CD4-positive, alpha-beta memory T cell (primary cell): ENCODE measurements at regions of chr1 and their contacts with region 1.

Region 1: DNA sequence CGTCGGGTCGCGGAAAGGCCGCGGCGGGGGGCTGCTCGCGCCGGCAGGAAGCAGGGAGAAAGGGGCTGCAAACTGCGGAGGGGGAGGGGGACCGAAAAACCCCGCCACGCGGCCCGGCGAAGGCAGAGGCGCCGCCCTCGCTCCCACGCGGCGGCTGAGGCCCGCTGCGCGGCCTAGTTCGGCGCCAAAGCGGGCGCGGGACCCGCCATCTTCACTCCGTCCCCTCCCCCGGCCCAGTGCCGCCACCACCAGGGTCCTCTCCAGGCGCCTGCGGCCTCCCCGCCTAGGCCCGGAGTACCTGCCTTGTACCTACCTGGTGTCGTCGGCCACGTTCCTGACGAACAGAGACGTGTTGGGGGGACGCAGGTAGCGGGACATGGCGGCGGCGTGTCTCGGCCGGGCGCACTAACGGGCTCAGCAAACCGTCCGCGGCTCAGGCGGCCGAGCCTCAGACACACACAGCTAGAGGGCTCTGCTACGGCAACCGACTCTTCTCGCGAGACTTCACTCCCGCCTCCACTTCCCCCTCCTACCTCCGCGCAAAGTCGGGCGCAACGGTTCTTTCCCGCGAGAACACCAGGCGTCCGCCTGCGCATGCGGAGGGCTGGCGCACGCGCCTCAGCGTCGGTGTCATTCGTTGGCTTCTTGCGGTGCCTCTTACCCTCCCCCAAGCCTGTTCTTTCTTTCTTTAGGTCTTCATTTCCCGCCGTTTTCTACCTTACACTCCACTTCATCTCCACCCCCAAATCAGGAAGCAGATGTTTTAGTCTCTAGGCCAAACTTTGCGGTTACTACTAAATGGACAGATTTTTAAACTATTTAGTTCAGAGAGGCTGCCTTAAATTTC is at the start of gene SRSF10:
- DNase-seq: peak; percentile 97 to 99 (median 98)
- H3K4me3 ChIP-seq: peak within 1 kb of the TSS; percentile 80 to 85
- H3K4me3 Mint-ChIP-seq: peak within 1 kb of the TSS; percentile 88 to 98 (median 94)
- H3K27ac ChIP-seq: peak within 1 kb of the TSS; percentile 93
- H3K27ac Mint-ChIP-seq: peak within 1 kb of the TSS; percentile 92 to 99 (median 97)
- H3K4me1 ChIP-seq: peaks cover 50% of the 10 kb centered on the region
- H3K4me1 Mint-ChIP-seq: peaks cover 38 to 55% (median 47%) of the 10 kb centered on the region in 4 donors
- H3K27me3 ChIP-seq: no peaks in the 10 kb centered on the region
- H3K27me3 Mint-ChIP-seq: no peaks in the 10 kb centered on the region
- total RNA-seq, gene SRSF10: 163 to 169 TPM

Region 2: DNA sequence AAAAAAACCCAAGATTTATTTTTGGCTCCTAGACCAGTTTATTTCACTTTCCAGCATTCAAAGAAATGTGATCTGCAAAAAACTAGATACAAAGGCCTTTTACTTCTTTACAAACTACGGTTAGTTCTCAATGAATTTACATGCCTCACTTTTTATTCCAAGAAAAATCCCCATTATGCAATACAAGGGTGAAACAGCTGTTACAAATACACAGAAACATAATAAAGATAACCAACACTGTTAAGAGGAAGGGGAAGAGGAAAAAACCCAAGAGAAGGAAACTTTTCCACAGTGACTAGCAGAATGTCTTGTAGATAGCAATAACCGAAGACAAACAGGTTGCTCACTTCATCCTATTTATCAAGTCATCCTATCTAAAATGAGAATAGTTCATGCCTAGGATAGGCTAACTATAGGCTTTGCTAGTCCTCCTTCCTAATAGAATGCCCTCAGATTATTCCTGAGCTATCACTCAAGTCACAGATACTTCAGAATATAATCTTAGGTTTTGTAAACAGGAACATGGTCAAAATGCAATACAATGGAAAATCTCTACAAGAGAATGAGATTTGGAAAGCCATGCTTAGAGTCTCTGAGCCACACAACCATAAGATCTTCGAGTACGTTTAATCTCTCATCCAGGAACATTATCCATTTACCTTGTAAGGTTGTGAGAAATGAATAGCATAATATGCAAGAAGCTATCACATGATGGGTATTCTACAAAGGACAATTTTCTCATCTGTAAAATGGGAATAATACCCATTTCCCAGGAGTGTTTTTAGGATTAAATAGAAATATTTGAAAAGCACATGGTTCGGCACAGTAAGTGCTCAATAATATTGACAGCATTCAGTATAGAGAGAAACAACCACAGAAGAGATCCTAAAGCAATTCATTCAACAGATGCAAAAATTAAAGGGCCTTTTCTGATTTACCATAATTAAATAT is 15.0 kb before region 1 on chr1:
- CTCF ChIA-PET with region 1: interaction called, 5 read pairs
- POLR2A ChIA-PET with region 1: interaction called, 80 read pairs
- intact Hi-C with region 1: no loop called
- DNase-seq: no peak
- H3K4me3 ChIP-seq: no peak overlapping the region
- H3K4me3 Mint-ChIP-seq: peak overlapping the region in 1 of 8 donors; percentile 52
- H3K27ac ChIP-seq: peak overlapping the region; percentile 17
- H3K27ac Mint-ChIP-seq: peak overlapping the region; percentile 52 to 89 (median 69)
- H3K4me1 ChIP-seq: peaks cover 41% of the 10 kb centered on the region
- H3K4me1 Mint-ChIP-seq: peaks cover 32 to 73% (median 50%) of the 10 kb centered on the region in 4 donors
- H3K27me3 ChIP-seq: no peaks in the 10 kb centered on the region
- H3K27me3 Mint-ChIP-seq: no peaks in the 10 kb centered on the region

Region 3: DNA sequence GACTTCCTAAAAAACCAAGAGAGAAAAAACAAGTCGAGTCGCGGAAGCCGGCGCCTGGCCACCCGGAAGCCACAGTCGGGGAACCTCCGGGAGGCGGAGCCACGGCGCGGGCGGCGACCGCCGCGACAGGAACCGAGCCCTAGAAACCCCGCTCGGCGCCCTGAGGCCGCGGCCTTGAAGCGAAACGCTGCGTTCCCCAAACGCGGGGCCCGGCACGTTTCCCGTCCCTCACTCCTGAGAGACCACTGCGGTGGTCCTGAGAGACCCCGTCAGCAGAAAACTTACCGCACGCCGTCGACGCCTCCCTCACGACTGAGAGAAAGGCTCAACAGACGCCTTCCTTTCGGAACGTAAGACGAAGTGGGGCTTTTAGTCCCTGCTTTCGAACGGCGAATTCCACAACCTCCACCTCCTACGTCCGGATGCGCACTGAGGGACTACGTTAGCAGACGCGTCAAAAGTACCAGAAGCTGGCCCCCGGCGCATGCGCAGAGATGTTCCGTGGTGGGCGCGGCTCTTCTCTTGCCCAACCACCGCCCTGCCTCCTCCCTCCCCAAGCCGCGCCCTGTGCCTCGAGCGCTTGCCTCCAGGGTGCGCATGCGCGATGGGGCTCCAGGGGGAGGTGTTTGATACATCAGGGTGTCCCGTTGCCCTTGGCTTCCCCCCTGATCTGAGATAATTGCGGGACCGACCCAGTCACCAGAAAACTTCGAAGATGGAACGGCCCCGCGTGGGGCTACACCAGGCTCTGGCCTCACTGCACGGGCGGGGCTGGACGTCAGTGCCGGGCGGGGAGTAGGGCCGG is 1267.1 kb after region 1 on chr1 and contains the start of gene RSRP1:
- CTCF ChIA-PET with region 1: no interaction called
- POLR2A ChIA-PET with region 1: no interaction called
- intact Hi-C with region 1: loop called (anchors 2 kb)
- DNase-seq: peak; percentile 99 to 100 (median 99)
- H3K4me3 ChIP-seq: peak within 1 kb of the TSS; percentile 89 to 98
- H3K4me3 Mint-ChIP-seq: peak within 1 kb of the TSS; percentile 96 to 100 (median 98)
- H3K27ac ChIP-seq: peak within 1 kb of the TSS; percentile 97
- H3K27ac Mint-ChIP-seq: peak within 1 kb of the TSS; percentile 99 to 100 (median 100)
- H3K4me1 ChIP-seq: peaks cover 45% of the 10 kb centered on the region
- H3K4me1 Mint-ChIP-seq: peaks cover 25 to 66% (median 39%) of the 10 kb centered on the region in 4 donors
- H3K27me3 ChIP-seq: no peaks in the 10 kb centered on the region
- H3K27me3 Mint-ChIP-seq: peaks cover 0 to 2% of the 10 kb centered on the region in 2 donors
- total RNA-seq, gene RSRP1: 470 to 494 TPM